ENCODE measurements at regions of chr18 and their contacts with region 1.

Region 1: DNA sequence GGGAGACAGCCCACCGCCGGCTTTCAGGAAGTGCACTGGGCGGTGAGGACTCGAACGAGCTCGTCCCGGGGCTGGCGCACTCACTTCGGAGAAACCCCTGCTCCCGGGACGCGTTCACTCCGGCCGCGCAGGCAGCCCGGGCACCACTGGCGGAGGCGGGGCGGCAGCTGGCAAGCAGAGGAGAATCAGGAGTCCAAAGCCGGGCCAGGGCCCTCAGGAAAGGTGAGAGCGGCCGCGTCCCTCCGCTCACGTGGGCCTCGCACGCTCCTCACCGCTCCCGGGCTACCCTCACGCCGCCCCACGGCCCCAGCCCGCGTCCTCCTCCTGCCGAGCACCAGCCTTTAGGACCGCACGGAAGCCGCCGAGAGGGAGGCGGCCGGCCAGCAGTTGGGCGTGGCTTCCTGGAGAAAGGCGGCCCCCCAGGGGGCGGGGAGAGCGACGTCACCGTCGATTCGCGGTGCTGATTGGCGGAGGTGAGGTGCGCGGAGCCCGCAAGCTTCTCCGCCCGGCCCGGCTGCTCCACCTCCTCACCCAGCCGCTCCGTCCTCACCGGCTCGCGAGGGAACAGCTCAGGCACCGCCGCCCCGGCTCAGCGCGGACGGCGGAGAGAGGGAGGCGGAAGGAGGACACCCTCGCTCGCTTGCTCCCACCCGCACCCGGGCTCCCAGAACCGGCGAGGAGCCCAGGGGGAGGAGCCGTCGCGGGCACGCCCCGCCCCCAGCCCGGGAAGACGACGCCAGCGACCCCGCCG is at the start of gene ZCCHC2:
- DNase-seq: peak; percentile 98
- H3K4me3 Mint-ChIP-seq: peak within 1 kb of the TSS; percentile 94
- H3K27ac Mint-ChIP-seq: peak within 1 kb of the TSS; percentile 92
- H3K4me1 Mint-ChIP-seq: peaks cover 35% of the 10 kb centered on the region
- H3K27me3 Mint-ChIP-seq: no peaks in the 10 kb centered on the region

Region 2: DNA sequence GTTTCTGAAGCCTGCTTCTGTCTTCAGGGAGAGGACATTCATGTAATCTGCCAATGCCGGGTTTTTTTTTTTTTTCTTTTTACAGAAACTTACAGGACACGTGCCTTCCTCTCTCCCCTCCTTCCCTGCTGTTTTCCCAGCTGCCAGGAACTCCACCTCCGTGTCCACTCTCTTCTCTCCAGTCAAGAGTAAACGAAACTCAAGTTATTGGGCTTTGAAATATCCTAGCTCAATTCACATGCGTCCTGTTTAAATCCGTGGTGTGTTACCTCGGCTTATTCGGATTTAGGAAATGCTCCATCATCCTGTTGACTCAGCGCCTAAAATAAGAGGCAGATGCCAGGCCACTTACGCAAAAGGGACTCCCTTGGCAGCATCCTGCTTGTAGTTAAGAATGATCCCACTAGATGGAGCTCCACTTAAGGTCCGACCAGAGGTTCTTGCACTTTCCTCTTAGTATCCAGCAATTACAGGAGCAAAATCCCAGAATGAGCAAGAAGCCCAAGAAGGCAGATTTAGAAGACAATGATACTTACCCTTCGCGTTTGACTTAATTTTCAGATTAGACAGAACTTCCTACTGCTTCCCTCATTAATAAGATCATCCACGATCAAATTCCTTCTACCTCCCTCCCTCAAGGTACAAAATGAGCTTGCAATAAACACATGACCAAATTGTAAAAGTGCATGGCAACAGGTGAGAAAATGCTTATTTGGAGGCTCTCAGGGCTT is 97.0 kb before region 1 on chr18:
- CTCF ChIA-PET with region 1: interaction called, 25 read pairs
- DNase-seq: peak; percentile 68
- H3K4me3 Mint-ChIP-seq: no peak overlapping the region
- H3K27ac Mint-ChIP-seq: peak overlapping the region; percentile 6
- H3K4me1 Mint-ChIP-seq: peaks cover 50% of the 10 kb centered on the region
- H3K27me3 Mint-ChIP-seq: peaks cover 3% of the 10 kb centered on the region

Region 3: DNA sequence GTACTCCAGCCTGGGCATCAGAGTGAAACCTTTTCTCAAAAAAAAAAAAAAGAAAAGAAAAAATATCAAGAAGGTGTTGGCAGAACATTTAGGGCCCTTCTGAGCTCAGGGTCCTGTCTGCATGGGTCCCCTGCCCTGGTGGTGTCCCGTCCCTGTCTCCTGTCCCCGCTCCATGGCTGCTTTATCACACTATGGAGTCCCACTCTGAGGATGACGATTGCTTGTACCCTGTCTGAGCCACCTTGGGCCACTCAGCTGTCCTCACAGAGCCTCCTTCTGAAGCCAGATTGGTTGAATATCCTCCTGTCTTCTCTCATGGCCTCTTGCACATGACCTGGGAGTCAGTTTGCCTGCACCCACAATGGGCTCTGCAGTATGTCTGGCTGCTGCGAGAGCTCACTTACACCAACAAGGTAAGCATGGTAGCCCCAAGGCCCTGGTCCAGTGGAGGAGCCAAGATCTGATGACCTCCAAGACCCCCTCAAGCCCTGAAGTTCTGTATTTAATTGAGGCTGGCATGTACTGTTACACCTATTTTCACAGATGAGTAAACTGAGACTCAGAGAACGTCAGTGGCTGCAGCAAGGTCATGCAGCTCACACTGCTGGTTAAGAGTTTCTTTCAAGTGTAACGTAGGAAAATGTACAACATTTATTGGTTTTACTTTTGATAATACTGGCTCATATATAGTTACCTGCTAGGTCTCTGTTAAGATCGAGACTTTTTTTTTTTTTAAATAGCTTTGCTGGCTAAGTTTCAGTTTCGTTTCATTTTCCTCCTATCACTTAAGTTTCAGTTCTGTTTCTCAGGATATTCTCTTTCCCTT is 16.8 kb before region 1 on chr18:
- CTCF ChIA-PET with region 1: interaction called, 19 read pairs
- DNase-seq: peak; percentile 42
- H3K4me3 Mint-ChIP-seq: peak overlapping the region; percentile 76
- H3K27ac Mint-ChIP-seq: peak overlapping the region; percentile 99
- H3K4me1 Mint-ChIP-seq: peaks cover 24% of the 10 kb centered on the region
- H3K27me3 Mint-ChIP-seq: peaks cover 7% of the 10 kb centered on the region